ENCODE measurements at regions of chr17 and their contacts with region 1.

Region 1: GRCh38 chr17:34443619-34444469 is 80.8 kb upstream of the CCL1 start:
- DNase-seq: peak; percentile 25 to 30
- ATAC-seq: peak in 6 of 8 donors; percentile 53 to 78 (median 66)
- H3K4me3 ChIP-seq: no peak overlapping the region
- H3K27ac ChIP-seq: no peak overlapping the region
- H3K4me1 ChIP-seq: peaks cover 0 to 7% (median 0%) of the 10 kb centered on the region in 9 donors
- H3K27me3 ChIP-seq: peaks cover 0 to 22% (median 12%) of the 10 kb centered on the region in 7 donors
- CTCF ChIP-seq: peak in 8 of 9 donors; percentile 7 to 63 (median 46)

Region 2: GRCh38 chr17:34519282-34519681 is 75.4 kb after region 1 on chr17:
- intact Hi-C with region 1: loop called in 1 of 10 experiments (anchors 2 kb)
- DNase-seq: no peak
- ATAC-seq: peak in 2 of 8 donors; percentile 50 to 58
- H3K4me3 ChIP-seq: no peak overlapping the region
- H3K27ac ChIP-seq: no peak overlapping the region
- H3K4me1 ChIP-seq: no peaks in the 10 kb centered on the region
- H3K27me3 ChIP-seq: peaks cover 0 to 60% (median 22%) of the 10 kb centered on the region in 7 donors
- CTCF ChIP-seq: peak in 7 of 9 donors; percentile 38 to 63 (median 46)

Region 3: GRCh38 chr17:34637548-34638525 is 194.0 kb after region 1 on chr17:
- intact Hi-C with region 1: loop called in 2 of 10 experiments (anchors 5 to 10 kb)
- DNase-seq: peak; percentile 73 to 75
- ATAC-seq: peak; percentile 87 to 97 (median 92)
- H3K4me3 ChIP-seq: peak overlapping the region in 9 of 10 donors; percentile 27 to 53 (median 49)
- H3K27ac ChIP-seq: no peak overlapping the region
- H3K4me1 ChIP-seq: peaks cover 0 to 11% (median 7%) of the 10 kb centered on the region in 9 donors
- H3K27me3 ChIP-seq: peaks cover 10 to 90% (median 75%) of the 10 kb centered on the region in 7 donors
- CTCF ChIP-seq: peak; percentile 67 to 89 (median 85)

Measured in heart right ventricle (tissue), 16 donors.